ENCODE measurements at regions of chr3 and their contacts with region 1.

Region 1: DNA sequence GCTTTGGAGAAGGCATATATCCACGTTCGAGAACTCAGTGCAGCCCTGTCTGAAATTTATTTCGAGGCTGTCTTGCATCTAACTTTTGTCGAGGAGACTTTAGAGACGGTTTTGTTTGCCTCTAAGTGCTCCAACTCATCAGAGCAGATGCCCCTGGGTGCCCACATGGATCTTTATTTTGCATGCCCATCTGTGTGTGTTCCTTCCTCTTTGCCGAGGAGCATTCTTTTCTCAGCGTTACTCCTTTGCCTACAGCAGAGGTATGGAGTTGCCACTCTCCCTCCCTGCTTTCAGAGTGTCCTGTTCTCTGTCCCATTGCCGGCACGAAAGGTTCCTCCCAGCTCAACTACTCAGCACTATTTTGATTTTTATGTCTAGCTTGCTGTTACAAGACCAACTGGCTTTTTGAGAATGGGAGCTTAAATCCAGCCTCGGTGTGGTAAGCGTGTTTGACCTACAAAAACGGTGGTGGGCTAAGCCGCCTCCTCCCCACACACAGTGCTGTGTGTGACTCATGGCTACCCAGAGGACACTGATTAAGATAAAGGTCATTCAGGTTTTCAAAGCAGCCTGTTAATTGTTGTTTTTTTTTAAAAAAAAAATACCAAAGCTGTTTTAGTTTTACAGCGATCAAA is 64.6 kb downstream of the LRTM1 start:
- DNase-seq: no peak
- ATAC-seq: no peak

Region 2: GRCh38 chr3:55169608-55170010 is 306.4 kb after region 1 on chr3:
- intact Hi-C with region 1: loop called in 1 of 2 experiments (anchors 10 kb)
- DNase-seq: no peak
- ATAC-seq: no peak

Measured in left colon (tissue), 2 donors.